Naive thymus-derived CD8-positive, alpha-beta T cell (primary cell): ENCODE measurements at regions of chr5 and their contacts with region 1.

Region 1: DNA sequence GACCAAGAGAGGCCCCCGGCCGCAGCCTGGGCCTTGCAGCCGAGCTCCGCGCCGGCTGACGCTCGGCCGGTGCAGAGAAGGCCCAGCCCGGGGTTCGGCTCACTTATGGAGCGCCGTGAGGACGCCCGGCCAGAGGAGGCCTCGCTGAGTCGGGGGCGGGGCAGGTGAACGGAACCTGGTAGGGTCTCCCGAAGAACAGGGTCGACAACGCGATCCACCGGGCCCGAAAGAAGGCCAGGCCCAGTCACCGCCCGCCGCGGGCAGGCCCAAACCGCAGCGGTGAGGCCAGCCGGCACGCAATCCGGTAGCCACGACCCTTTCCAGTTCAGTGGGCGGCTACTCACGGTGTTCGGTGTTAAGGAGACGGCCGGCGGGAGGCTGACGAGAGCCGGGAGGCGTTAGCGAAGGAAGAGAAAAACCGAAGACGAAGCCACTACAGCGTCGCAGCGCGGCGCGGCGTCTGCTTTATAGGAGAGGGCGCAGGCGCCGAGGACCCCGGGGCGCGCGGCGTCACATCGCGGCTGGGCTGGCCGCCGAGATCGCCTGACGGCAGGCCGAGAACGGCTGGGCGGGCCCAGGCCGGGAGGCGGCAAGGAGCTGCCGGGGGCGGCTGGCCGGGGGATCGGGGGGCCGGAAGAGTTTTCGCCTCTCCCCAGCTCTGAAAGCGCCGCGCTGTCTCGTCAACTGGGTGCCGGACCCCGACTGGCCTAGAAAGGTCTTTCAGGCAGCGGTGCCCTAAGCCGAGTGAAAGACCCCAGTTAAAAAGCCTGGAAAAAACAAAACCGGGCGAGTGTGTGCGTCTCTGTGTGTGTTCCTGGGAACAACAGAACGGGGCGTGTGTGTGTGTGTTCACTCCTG is at the start of gene SKP1:
- DNase-seq: peak; percentile 73 to 95 (median 87)
- ATAC-seq: peak; percentile 81 to 83
- H3K4me3 Mint-ChIP-seq: peak within 1 kb of the TSS; percentile 93 to 99 (median 96)
- H3K27ac Mint-ChIP-seq: peak within 1 kb of the TSS; percentile 95 to 99 (median 98)
- H3K4me1 Mint-ChIP-seq: peaks cover 16 to 38% (median 30%) of the 10 kb centered on the region in 4 donors
- H3K27me3 Mint-ChIP-seq: no peaks in the 10 kb centered on the region
- polyA plus RNA-seq, gene SKP1: 1,138 to 1,312 (median 1,209) TPM

Region 2: GRCh38 chr5:134004592-134005375 is 172.0 kb before region 1 on chr5 and contains the start of gene VDAC1:
- POLR2A ChIA-PET with region 1: interaction called, 19 read pairs
- DNase-seq: peak; percentile 70 to 93 (median 88)
- ATAC-seq: peak; percentile 80 to 81
- H3K4me3 Mint-ChIP-seq: peak within 1 kb of the TSS; percentile 86 to 95 (median 92)
- H3K27ac Mint-ChIP-seq: peak within 1 kb of the TSS; percentile 90 to 98 (median 95)
- H3K4me1 Mint-ChIP-seq: peaks cover 21 to 52% (median 43%) of the 10 kb centered on the region in 4 donors
- H3K27me3 Mint-ChIP-seq: no peaks in the 10 kb centered on the region
- polyA plus RNA-seq, gene VDAC1: 64.4 to 72.9 (median 68.3) TPM

Region 3: GRCh38 chr5:134101686-134102439 is 74.9 kb before region 1 on chr5:
- POLR2A ChIA-PET with region 1: interaction called, 11 read pairs
- DNase-seq: peak; percentile 60 to 87 (median 78)
- ATAC-seq: peak; percentile 12 to 37
- H3K4me3 Mint-ChIP-seq: peak overlapping the region in 9 of 10 donors; percentile 4 to 81 (median 52)
- H3K27ac Mint-ChIP-seq: peak overlapping the region; percentile 88 to 98 (median 96)
- H3K4me1 Mint-ChIP-seq: peaks cover 44 to 93% (median 90%) of the 10 kb centered on the region in 4 donors
- H3K27me3 Mint-ChIP-seq: no peaks in the 10 kb centered on the region

Region 4: GRCh38 chr5:134125039-134126015 is 51.4 kb before region 1 on chr5:
- POLR2A ChIA-PET with region 1: interaction called, 12 read pairs
- DNase-seq: no peak
- ATAC-seq: no peak
- H3K4me3 Mint-ChIP-seq: peak overlapping the region; percentile 93 to 100 (median 98)
- H3K27ac Mint-ChIP-seq: peak overlapping the region; percentile 91 to 99 (median 97)
- H3K4me1 Mint-ChIP-seq: peaks cover 47 to 100% (median 91%) of the 10 kb centered on the region in 4 donors
- H3K27me3 Mint-ChIP-seq: no peaks in the 10 kb centered on the region

Region 5: GRCh38 chr5:134140530-134141201 is 36.1 kb before region 1 on chr5:
- POLR2A ChIA-PET with region 1: interaction called, 23 read pairs
- DNase-seq: peak in 6 of 10 donors; percentile 48 to 75 (median 58)
- ATAC-seq: peak; percentile 37 to 43
- H3K4me3 Mint-ChIP-seq: peak overlapping the region in 6 of 10 donors; percentile 15 to 70 (median 39)
- H3K27ac Mint-ChIP-seq: peak overlapping the region; percentile 91 to 99 (median 96)
- H3K4me1 Mint-ChIP-seq: peaks cover 39 to 82% (median 76%) of the 10 kb centered on the region in 4 donors
- H3K27me3 Mint-ChIP-seq: no peaks in the 10 kb centered on the region

Region 6: GRCh38 chr5:134153657-134154056 is 23.1 kb before region 1 on chr5:
- POLR2A ChIA-PET with region 1: interaction called, 73 read pairs
- DNase-seq: no peak
- ATAC-seq: no peak
- H3K4me3 Mint-ChIP-seq: peak overlapping the region in 5 of 10 donors; percentile 13 to 58 (median 34)
- H3K27ac Mint-ChIP-seq: peak overlapping the region in 8 of 10 donors; percentile 44 to 89 (median 78)
- H3K4me1 Mint-ChIP-seq: peaks cover 36 to 84% (median 79%) of the 10 kb centered on the region in 4 donors
- H3K27me3 Mint-ChIP-seq: no peaks in the 10 kb centered on the region

Region 7: GRCh38 chr5:134225618-134226440 is 49.1 kb after region 1 on chr5 and contains the start of gene PPP2CA:
- POLR2A ChIA-PET with region 1: interaction called, 66 read pairs
- DNase-seq: peak; percentile 97 to 100 (median 99)
- ATAC-seq: peak; percentile 73 to 76
- H3K4me3 Mint-ChIP-seq: peak within 1 kb of the TSS; percentile 88 to 100 (median 96)
- H3K27ac Mint-ChIP-seq: peak within 1 kb of the TSS; percentile 92 to 99 (median 98)
- H3K4me1 Mint-ChIP-seq: peaks cover 23 to 60% (median 52%) of the 10 kb centered on the region in 4 donors
- H3K27me3 Mint-ChIP-seq: peaks cover 0 to 3% (median 0%) of the 10 kb centered on the region in 5 donors
- polyA plus RNA-seq, gene PPP2CA: 185 to 192 (median 191) TPM